HEK293T (cell line): ENCODE measurements at regions of chr5 and their contacts with region 1.

Region 1: GRCh38 chr5:39523821-39524220 is 99.0 kb upstream of the DAB2 start:
- DNase-seq: no peak

Region 2: DNA sequence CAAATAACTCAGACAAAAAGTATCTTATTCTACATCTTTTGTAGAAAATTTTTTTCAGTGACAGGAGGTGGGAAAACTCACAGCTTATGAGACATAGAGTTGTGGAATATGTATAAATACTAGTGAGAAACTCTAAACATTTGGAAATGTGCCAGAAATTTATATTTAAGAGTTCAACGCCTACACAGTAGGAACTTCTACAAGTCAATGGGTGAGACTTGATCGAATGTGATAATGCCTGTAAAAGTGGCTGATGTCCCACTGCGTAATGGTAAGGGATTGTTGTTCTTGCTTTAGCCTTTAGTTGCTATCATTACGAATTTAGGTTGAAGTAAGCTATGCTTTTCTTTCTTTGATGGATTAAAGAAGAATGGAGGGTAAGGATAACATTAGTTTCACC is 409.7 kb before region 1 on chr5:
- CTCF ChIA-PET with region 1: interaction called, 15 read pairs
- POLR2A ChIA-PET with region 1: no interaction called
- DNase-seq: no peak

Region 3: GRCh38 chr5:39194466-39195136 is 329.2 kb before region 1 on chr5:
- CTCF ChIA-PET with region 1: no interaction called
- POLR2A ChIA-PET with region 1: no interaction called
- DNase-seq: no peak

Region 4: GRCh38 chr5:39648532-39649213 is 124.9 kb after region 1 on chr5:
- CTCF ChIA-PET with region 1: no interaction called
- POLR2A ChIA-PET with region 1: no interaction called
- DNase-seq: no peak